IMR-90 (cell line): ENCODE measurements at regions of chr14 and their contacts with region 1.

Region 1: GRCh38 chr14:105045710-105046326 is 19.4 kb downstream of the GPR132 start:
- DNase-seq: peak; percentile 74
- ATAC-seq: peak; percentile 99
- H3K4me3 ChIP-seq: peak overlapping the region; percentile 3; the same call in 1 of the 2 replicates
- H3K27ac ChIP-seq: no peak overlapping the region
- H3K4me1 ChIP-seq: peaks cover 3% of the 10 kb centered on the region; the same call in 1 of the 2 replicates
- H3K27me3 ChIP-seq: peaks cover 10% of the 10 kb centered on the region
- CTCF ChIP-seq: peak; percentile 100
- POLR2A ChIP-seq: peak; percentile 62
- RAD21 ChIP-seq: peak; percentile 100

Region 2: DNA sequence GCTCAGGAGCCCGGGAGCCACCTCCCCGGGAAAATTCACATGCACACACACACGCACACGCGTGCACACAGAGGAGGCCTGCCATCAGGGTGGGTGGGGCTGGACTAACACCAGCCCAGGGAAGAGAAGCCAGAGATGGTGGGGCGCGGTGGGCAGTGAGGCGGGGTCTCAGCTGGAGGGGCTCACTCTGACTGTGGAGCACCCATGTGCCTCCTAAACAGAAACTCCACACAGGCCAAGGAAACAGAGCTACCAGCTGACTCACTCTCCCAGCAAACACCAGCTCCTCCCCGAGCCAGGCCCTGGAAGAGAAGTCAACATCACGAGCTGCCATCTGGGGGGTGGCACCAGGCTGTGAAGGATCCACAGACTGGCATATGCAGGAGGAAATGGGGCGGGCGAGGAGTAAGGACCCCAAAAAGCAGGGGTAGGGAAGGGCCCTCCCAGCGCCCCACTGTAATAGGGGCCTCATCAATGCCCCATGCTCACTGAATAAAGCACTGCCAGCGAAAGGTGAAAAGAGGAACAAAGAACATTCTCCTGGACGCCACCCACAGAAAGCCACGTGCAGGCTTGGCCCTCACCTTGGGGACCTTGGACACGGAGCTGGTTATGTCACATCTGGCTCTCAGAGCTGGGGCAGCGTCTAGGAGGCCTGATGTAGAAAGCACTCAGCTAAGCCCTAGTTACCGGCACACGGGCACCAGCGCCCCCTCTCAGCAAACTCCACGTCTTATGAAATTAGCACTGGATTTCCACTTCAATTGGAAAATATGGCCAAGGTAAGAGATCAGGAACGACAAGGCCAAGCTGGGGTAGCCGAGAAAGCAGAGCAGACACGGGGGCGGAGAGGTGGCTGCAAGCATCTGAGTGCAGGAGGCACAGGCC is 364.8 kb before region 1 on chr14:
- CTCF ChIA-PET with region 1: no interaction called
- POLR2A ChIA-PET with region 1: no interaction called
- dilution Hi-C with region 1: no loop called
- in situ Hi-C with region 1: no loop called
- intact Hi-C with region 1: no loop called
- DNase-seq: peak; percentile 85
- ATAC-seq: peak; percentile 46
- H3K4me3 ChIP-seq: no peak overlapping the region
- H3K27ac ChIP-seq: peak overlapping the region; percentile 97
- H3K4me1 ChIP-seq: peaks cover 43% of the 10 kb centered on the region
- H3K27me3 ChIP-seq: no peaks in the 10 kb centered on the region
- CTCF ChIP-seq: peak; percentile 32
- POLR2A ChIP-seq: peak; percentile 49; the same call in 1 of the 2 replicates
- RAD21 ChIP-seq: peak; percentile 32; the same call in 1 of the 2 replicates

Region 3: DNA sequence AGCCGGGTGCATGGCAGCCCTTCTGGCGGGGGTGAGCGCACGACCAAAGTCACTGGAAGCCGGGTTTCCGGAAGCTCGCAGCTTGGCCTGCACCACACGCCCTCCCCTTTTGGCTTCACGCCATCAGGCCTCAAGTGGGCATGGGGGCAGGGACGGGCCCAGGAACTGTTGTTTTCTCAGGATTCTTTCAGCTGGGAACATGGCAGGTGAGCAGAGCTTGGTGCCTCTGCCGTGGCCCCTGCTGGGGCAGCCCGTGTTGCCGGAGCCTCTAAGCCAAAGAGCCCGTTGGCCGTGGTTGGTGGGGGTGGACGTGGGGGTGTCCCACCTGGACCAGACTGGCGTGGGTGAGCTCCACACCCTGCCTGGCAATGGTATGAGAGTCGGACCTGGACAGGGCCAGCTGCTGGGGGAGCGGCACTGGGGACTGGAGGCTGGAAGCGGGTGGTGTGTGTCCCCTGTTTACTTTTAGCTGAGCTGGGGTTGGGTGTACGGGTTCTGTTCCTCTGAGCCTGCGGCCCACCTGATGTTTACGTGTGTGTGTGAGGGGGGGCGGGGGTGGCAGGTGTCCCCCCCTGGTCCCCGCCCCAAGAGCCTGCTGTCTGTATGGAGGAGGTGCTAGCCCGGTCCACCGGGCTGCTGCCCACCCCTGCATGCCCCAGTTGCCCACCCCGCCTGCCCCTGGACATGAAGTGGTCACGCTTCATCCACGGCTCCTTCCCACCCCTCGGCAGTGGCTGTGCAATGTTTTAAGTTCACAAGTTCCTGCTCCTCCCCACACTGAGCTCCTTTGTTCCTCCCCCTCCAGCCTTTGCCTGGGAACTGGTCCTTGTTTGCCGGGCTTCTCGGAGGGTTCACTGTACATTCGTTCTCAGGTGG is 149.8 kb before region 1 on chr14:
- CTCF ChIA-PET with region 1: interaction called, 3 read pairs
- POLR2A ChIA-PET with region 1: no interaction called
- dilution Hi-C with region 1: no loop called
- in situ Hi-C with region 1: no loop called
- intact Hi-C with region 1: loop called (anchors 1 kb)
- DNase-seq: no peak
- ATAC-seq: no peak
- H3K4me3 ChIP-seq: no peak overlapping the region
- H3K27ac ChIP-seq: no peak overlapping the region
- H3K4me1 ChIP-seq: no peaks in the 10 kb centered on the region; the same call in 1 of the 2 replicates
- H3K27me3 ChIP-seq: peaks cover 5% of the 10 kb centered on the region
- CTCF ChIP-seq: no peak
- POLR2A ChIP-seq: no peak
- RAD21 ChIP-seq: no peak